CD4-positive, alpha-beta memory T cell (primary cell): ENCODE measurements at regions of chrX and their contacts with region 1.

Region 1: GRCh38 chrX:120477453-120477852 is 8.4 kb upstream of the LAMP2 start:
- DNase-seq: no peak
- H3K4me3 ChIP-seq: no peak overlapping the region
- H3K4me3 Mint-ChIP-seq: no peak overlapping the region
- H3K27ac ChIP-seq: no peak overlapping the region
- H3K27ac Mint-ChIP-seq: no peak overlapping the region
- H3K4me1 ChIP-seq: no peaks in the 10 kb centered on the region
- H3K4me1 Mint-ChIP-seq: no peaks in the 10 kb centered on the region
- H3K27me3 ChIP-seq: no peaks in the 10 kb centered on the region
- H3K27me3 Mint-ChIP-seq: no peaks in the 10 kb centered on the region

Region 2: DNA sequence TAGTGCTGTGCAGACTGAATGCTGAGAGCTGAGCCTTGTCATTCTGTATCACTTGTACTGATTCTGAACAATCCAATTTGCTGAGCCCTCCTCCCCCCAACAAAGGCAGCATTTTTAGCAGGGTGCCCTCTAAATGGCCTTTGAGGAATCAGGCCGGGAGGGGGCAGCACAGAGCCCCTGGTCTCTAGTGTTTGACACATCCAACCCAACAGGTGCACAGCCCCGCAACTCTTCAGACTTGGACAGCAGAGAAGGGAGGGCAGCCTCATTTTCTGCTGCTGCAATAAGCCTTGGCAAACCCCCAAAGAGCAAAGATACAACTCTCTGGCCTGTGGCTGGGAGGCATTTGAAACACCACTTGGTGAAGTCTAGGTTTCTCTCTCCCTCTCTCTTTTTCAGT is 112.1 kb before region 1 on chrX:
- CTCF ChIA-PET with region 1: interaction called, 18 read pairs
- POLR2A ChIA-PET with region 1: no interaction called
- intact Hi-C with region 1: loop called (anchors 1 kb)
- DNase-seq: peak; percentile 19 to 44 (median 31)
- H3K4me3 ChIP-seq: no peak overlapping the region
- H3K4me3 Mint-ChIP-seq: no peak overlapping the region
- H3K27ac ChIP-seq: no peak overlapping the region
- H3K27ac Mint-ChIP-seq: no peak overlapping the region
- H3K4me1 ChIP-seq: no peaks in the 10 kb centered on the region
- H3K4me1 Mint-ChIP-seq: no peaks in the 10 kb centered on the region
- H3K27me3 ChIP-seq: no peaks in the 10 kb centered on the region
- H3K27me3 Mint-ChIP-seq: peaks cover 2 to 4% of the 10 kb centered on the region in 2 donors

Region 3: GRCh38 chrX:120380699-120381098 is 96.8 kb before region 1 on chrX:
- CTCF ChIA-PET with region 1: interaction called, 25 read pairs
- POLR2A ChIA-PET with region 1: interaction called, 3 read pairs
- intact Hi-C with region 1: loop called (anchors 1 kb)
- DNase-seq: peak; percentile 39 to 54 (median 47)
- H3K4me3 ChIP-seq: no peak overlapping the region
- H3K4me3 Mint-ChIP-seq: no peak overlapping the region
- H3K27ac ChIP-seq: no peak overlapping the region
- H3K27ac Mint-ChIP-seq: no peak overlapping the region
- H3K4me1 ChIP-seq: no peaks in the 10 kb centered on the region
- H3K4me1 Mint-ChIP-seq: peaks cover 0 to 7% (median 4%) of the 10 kb centered on the region in 4 donors
- H3K27me3 ChIP-seq: no peaks in the 10 kb centered on the region
- H3K27me3 Mint-ChIP-seq: peaks cover 0 to 1% of the 10 kb centered on the region in 2 donors